Activated CD4-positive, alpha-beta memory T cell treated with anti-CD3 and anti-CD28 coated beads, Interleukin-2, amount 10 ng/mL, durations not matched to agents 7 days and 5 days (primary cell): ENCODE measurements at regions of chr3 and their contacts with region 1.

Region 1: GRCh38 chr3:30658328-30659052 is 52.1 kb downstream of the TGFBR2 start:
- DNase-seq: peak; percentile 64
- H3K4me3 Mint-ChIP-seq: peak overlapping the region; percentile 59
- H3K27ac Mint-ChIP-seq: peak overlapping the region; percentile 99
- H3K4me1 Mint-ChIP-seq: peaks cover 98% of the 10 kb centered on the region
- H3K27me3 Mint-ChIP-seq: no peaks in the 10 kb centered on the region

Region 2: DNA sequence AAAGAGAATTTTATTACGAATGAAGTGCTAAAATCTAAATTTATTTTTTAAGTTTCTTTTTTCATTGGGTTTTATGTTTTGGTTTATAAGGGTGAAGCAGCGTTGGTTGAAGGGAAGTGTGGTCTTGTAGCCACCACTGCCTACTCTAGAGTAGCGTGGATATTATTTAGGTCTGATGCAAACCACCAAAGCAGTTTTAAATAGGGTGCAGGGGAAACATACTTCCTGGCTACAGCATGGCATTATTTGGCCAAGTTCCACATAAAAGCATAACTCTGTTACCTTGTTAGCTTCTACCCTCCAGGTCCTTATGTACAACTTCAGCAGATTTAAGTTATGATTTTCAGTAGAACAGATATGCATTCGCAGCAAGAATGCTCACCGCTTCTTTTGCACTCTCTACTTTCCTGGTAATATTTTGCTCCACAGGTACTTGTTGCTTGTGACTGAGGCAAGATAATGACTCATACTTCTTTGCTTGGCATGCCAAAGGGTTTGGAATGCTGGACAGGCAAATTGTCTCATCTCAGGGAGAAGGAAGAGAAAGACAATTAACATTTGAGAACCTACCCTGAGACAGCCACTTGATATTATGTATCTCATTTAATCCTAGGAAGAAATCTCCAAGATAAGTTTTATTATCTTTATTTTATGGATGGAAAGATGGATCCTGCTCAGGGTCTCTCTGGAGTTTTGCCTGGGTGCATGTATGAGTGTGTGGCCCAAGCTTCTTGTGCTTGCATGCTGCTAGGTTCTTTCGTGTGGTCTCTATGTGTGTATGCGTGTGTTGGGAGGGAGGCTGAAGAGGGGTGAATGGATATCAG is 46.7 kb before region 1 on chr3:
- CTCF ChIA-PET with region 1: interaction called, 14 read pairs
- POLR2A ChIA-PET with region 1: interaction called, 111 read pairs
- DNase-seq: no peak
- H3K4me3 Mint-ChIP-seq: peak overlapping the region; percentile 93
- H3K27ac Mint-ChIP-seq: peak overlapping the region; percentile 88
- H3K4me1 Mint-ChIP-seq: peaks cover 72% of the 10 kb centered on the region
- H3K27me3 Mint-ChIP-seq: no peaks in the 10 kb centered on the region

Region 3: DNA sequence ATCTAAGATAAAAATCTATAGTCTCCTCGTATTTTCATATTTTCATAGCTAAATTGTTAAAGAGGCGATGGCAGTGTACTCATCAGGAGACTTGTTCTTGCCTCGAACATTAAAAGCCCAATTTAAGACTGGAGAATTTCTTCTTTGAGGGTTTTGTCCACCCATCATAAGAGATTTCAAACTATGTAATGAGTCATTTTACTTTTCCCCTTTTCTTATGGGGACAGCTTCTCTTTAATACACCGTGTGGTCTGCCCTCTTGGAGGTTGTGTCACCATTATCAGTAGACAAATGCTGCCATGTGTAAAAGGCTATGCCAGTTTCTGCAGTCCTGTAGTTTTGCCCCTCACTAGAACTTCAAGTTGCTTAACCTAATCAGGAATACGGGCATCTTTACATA is 35.1 kb before region 1 on chr3:
- CTCF ChIA-PET with region 1: interaction called, 5 read pairs
- POLR2A ChIA-PET with region 1: interaction called, 17 read pairs
- DNase-seq: no peak
- H3K4me3 Mint-ChIP-seq: peak overlapping the region; percentile 22
- H3K27ac Mint-ChIP-seq: peak overlapping the region; percentile 65
- H3K4me1 Mint-ChIP-seq: peaks cover 90% of the 10 kb centered on the region
- H3K27me3 Mint-ChIP-seq: no peaks in the 10 kb centered on the region

Region 4: GRCh38 chr3:30628901-30629590 is 29.4 kb before region 1 on chr3:
- CTCF ChIA-PET with region 1: interaction called, 9 read pairs
- POLR2A ChIA-PET with region 1: interaction called, 303 read pairs
- DNase-seq: no peak
- H3K4me3 Mint-ChIP-seq: peak overlapping the region; percentile 19
- H3K27ac Mint-ChIP-seq: peak overlapping the region; percentile 97
- H3K4me1 Mint-ChIP-seq: peaks cover 89% of the 10 kb centered on the region
- H3K27me3 Mint-ChIP-seq: no peaks in the 10 kb centered on the region

Region 5: GRCh38 chr3:30644593-30645012 is 13.9 kb before region 1 on chr3:
- CTCF ChIA-PET with region 1: interaction called, 11 read pairs
- POLR2A ChIA-PET with region 1: interaction called, 303 read pairs
- DNase-seq: peak; percentile 66
- H3K4me3 Mint-ChIP-seq: peak overlapping the region; percentile 57
- H3K27ac Mint-ChIP-seq: peak overlapping the region; percentile 99
- H3K4me1 Mint-ChIP-seq: peaks cover 96% of the 10 kb centered on the region
- H3K27me3 Mint-ChIP-seq: no peaks in the 10 kb centered on the region